PC-9 (cell line): ENCODE measurements at regions of chr2 and their contacts with region 1.

Region 1: GRCh38 chr2:30217644-30218337 is 13.5 kb upstream of the LBH start:
- DNase-seq: peak; percentile 94 to 100
- H3K4me3 ChIP-seq: peak overlapping the region; percentile 24; the same call in 1 of the 2 replicates
- H3K27ac ChIP-seq: peak overlapping the region; percentile 81
- H3K4me1 ChIP-seq: peaks cover 49% of the 10 kb centered on the region
- H3K27me3 ChIP-seq: no peaks in the 10 kb centered on the region
- CTCF ChIP-seq: no peak

Region 2: DNA sequence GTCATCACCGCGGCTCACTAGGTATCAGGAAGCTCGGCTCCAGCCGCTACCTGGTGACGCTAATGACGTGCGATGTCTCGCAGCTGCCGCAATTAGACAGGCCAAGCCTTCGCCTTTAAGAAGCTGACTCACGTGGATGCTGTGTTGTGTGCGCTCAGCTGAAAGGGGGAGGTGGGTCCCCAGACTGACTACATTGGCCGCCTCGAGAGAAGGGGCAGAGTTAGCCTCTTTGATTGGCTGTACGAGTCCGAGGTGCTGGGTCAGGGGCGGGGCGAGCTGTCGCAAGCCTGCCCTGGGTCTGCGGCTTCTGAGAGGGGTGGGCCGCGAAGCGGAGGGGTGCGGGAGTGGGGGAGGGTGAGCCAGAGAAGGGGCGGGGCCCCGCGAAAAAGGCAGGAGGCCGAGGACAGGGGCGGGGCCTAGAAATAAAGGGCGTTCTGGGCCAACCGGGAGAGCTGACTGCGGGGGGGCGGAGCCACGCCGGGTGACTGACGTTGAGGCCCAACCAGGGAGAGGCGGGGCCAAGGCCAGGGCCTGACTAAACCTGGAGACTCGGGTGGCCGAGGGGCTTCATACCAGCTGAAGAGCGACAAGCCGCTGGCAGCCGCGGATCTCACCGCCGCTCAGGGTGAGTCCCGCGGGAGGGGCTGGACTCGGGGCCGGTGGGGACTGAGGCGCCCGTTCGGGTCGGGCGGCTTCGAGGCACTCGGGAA is 71.2 kb before region 1 on chr2 and contains the start of gene YPEL5:
- CTCF ChIA-PET with region 1: no interaction called
- POLR2A ChIA-PET with region 1: no interaction called
- intact Hi-C with region 1: loop called (anchors 5 kb)
- DNase-seq: peak; percentile 99 to 100
- H3K4me3 ChIP-seq: peak within 1 kb of the TSS; percentile 83
- H3K27ac ChIP-seq: peak within 1 kb of the TSS; percentile 50
- H3K4me1 ChIP-seq: peaks cover 39% of the 10 kb centered on the region
- H3K27me3 ChIP-seq: no peaks in the 10 kb centered on the region
- CTCF ChIP-seq: no peak
- total RNA-seq, gene YPEL5: 56.9 and 67.5 TPM in 2 replicates

Region 3: DNA sequence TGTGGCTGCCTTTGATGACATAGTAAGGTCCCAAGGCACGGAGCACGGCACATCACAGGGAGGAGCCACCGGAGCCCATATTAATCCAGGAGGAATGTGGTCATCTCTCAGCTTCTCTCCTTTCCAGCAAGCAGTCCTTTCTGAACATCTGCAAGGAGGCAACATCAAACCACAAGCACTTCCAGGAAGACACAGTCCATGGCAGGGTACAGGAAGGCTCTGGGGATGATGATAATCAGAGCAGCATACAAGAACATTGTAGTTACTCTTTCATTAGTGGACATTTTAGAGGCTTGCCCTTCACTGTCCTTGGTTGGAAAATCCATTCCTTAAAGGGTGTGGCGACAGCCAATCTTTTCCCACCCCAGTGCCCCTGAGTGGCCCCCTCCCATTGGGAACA is 39.8 kb before region 1 on chr2:
- CTCF ChIA-PET with region 1: no interaction called
- POLR2A ChIA-PET with region 1: no interaction called
- intact Hi-C with region 1: no loop called
- DNase-seq: no peak
- H3K4me3 ChIP-seq: no peak overlapping the region
- H3K27ac ChIP-seq: no peak overlapping the region
- H3K4me1 ChIP-seq: no peaks in the 10 kb centered on the region
- H3K27me3 ChIP-seq: peaks cover 23% of the 10 kb centered on the region; the same call in 1 of the 2 replicates
- CTCF ChIP-seq: no peak

Region 4: DNA sequence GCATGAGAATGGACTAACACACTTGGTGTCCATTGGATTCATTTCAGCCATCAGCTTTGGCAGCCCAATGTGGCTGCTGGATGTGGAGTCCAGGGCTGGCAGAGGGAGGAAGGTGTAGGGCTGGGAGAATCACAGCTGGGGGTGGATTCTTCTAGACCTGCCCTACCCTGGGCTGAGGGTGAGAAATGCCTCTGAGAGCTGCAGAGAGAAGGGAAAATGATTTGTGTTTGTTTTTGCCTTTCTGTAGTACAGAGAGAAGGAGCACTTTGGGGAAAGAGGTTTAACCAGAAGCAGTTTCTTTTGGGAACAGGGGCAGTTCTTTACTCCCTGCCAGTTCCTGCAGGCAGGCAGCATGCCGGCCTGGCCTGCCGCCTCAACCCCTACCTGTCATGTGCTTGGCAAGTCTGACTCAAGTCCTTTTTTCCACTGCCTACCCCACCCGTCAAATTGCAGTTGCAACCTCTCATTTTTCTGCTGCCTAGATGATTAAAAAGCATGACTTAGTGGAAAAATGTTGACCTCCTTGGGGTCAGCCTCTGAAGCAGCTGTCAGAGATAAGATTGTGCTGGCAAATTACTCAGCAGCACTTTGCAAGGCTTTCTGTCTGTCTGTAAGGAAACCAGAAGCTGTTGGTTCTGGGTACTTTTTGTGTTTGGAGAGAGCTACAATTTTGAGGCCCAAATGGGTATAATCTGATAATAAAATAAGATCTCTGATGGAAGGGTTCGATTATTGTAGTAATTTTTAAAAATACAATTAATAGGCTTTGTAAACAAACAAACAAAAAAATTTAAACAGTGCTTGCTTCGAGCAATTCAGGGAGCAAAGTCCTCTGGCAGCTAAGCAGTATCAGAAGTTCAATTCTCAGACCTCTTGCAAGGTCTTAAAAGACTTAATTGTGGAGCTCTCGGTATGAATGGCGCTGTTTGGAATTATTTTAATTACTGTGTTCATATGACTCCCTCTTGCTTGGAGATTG is 35.2 kb after region 1 on chr2:
- CTCF ChIA-PET with region 1: no interaction called
- POLR2A ChIA-PET with region 1: no interaction called
- intact Hi-C with region 1: loop called (anchors 1 kb)
- DNase-seq: peak; percentile 61 to 87
- H3K4me3 ChIP-seq: no peak overlapping the region
- H3K27ac ChIP-seq: peak overlapping the region; percentile 21; the same call in 1 of the 2 replicates
- H3K4me1 ChIP-seq: peaks cover 21% of the 10 kb centered on the region
- H3K27me3 ChIP-seq: no peaks in the 10 kb centered on the region
- CTCF ChIP-seq: no peak

Region 5: DNA sequence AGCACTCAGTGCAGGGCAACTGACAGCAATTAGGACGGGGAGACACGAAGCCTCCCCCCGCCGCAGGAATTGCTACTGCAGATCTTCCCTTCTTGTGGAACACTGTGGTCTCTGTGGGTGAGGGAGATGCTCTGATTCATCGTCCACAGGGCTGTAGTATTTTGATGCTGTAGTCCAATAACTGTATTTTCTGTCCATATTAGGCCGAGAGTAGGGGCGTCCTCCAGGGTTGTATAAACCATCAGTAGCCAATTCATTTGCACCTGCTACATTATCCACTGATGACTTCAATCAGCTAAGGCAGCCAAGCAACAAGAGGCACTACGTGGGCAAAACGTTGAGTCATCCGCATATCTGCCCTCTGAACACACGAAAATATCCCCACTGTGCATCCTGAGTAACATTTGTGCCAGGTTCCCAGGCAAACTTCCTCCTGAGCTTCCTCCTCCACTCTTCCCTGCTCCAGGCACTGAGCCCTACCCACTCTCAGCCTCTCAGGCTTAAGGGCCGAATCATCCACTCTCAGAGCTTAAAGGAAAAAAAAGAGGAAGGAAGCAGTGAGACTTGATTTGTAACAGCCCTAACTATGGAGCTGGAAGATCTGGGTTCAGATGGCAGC is 75.6 kb after region 1 on chr2:
- CTCF ChIA-PET with region 1: no interaction called
- POLR2A ChIA-PET with region 1: no interaction called
- intact Hi-C with region 1: loop called (anchors 1 kb)
- DNase-seq: peak; percentile 48 to 90
- H3K4me3 ChIP-seq: no peak overlapping the region
- H3K27ac ChIP-seq: peak overlapping the region; percentile 43
- H3K4me1 ChIP-seq: peaks cover 15% of the 10 kb centered on the region
- H3K27me3 ChIP-seq: no peaks in the 10 kb centered on the region
- CTCF ChIP-seq: no peak

Region 6: GRCh38 chr2:30447149-30448045 is 229.6 kb after region 1 on chr2 and contains the start of gene LCLAT1:
- CTCF ChIA-PET with region 1: no interaction called
- POLR2A ChIA-PET with region 1: no interaction called
- intact Hi-C with region 1: loop called (anchors 1 kb)
- DNase-seq: peak; percentile 56 to 74
- H3K4me3 ChIP-seq: peak within 1 kb of the TSS; percentile 89
- H3K27ac ChIP-seq: peak within 1 kb of the TSS; percentile 53
- H3K4me1 ChIP-seq: peaks cover 23% of the 10 kb centered on the region
- H3K27me3 ChIP-seq: no peaks in the 10 kb centered on the region
- CTCF ChIP-seq: no peak
- total RNA-seq, gene LCLAT1: 21.9 and 35.7 TPM in 2 replicates

Region 7: DNA sequence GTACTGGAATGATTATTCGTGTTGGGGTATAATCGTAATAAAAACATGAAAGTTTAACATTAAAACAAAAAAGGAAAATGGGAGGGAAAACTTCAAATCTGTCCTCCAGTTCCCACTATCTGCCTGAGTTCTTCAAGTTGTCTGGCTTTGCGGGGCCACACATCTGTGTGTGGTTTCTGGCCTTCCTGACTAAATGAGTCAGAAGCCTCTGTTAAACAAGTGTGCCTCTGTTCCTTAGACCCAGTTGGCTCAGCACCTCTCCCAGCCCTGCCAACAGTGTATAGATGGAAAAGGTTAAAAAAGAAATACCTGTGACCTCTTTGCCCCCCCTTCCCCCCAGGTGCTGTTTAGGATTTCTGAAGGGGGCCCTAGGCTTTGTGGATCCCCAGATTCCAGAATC is 1166.6 kb after region 1 on chr2:
- CTCF ChIA-PET with region 1: no interaction called
- POLR2A ChIA-PET with region 1: no interaction called
- intact Hi-C with region 1: loop called (anchors 10 kb)
- DNase-seq: peak in 1 of 2 experiments; percentile 92
- H3K4me3 ChIP-seq: peak overlapping the region; percentile 22; the same call in 1 of the 2 replicates
- H3K27ac ChIP-seq: peak overlapping the region; percentile 98
- H3K4me1 ChIP-seq: peaks cover 46% of the 10 kb centered on the region
- H3K27me3 ChIP-seq: no peaks in the 10 kb centered on the region
- CTCF ChIP-seq: no peak